Activated CD8-positive, alpha-beta memory T cell treated with anti-CD3 and anti-CD28 coated beads, Interleukin-2, amount 10 ng/mL, durations not matched to agents 7 days and 5 days (primary cell): ENCODE measurements at regions of chr1 and their contacts with region 1.

Region 1: GRCh38 chr1:206912445-206913095 is 9.2 kb downstream of the FCMR start:
- DNase-seq: peak; percentile 79
- ATAC-seq: peak; percentile 53
- H3K4me3 Mint-ChIP-seq: no peak overlapping the region
- H3K27ac Mint-ChIP-seq: no peak overlapping the region
- H3K4me1 Mint-ChIP-seq: peaks cover 40% of the 10 kb centered on the region
- H3K27me3 Mint-ChIP-seq: peaks cover 4% of the 10 kb centered on the region

Region 2: GRCh38 chr1:206489980-206490770 is 422.4 kb before region 1 on chr1:
- CTCF ChIA-PET with region 1: no interaction called
- DNase-seq: peak; percentile 79
- ATAC-seq: peak; percentile 81
- H3K4me3 Mint-ChIP-seq: no peak overlapping the region
- H3K27ac Mint-ChIP-seq: no peak overlapping the region
- H3K4me1 Mint-ChIP-seq: peaks cover 19% of the 10 kb centered on the region
- H3K27me3 Mint-ChIP-seq: no peaks in the 10 kb centered on the region

Region 3: DNA sequence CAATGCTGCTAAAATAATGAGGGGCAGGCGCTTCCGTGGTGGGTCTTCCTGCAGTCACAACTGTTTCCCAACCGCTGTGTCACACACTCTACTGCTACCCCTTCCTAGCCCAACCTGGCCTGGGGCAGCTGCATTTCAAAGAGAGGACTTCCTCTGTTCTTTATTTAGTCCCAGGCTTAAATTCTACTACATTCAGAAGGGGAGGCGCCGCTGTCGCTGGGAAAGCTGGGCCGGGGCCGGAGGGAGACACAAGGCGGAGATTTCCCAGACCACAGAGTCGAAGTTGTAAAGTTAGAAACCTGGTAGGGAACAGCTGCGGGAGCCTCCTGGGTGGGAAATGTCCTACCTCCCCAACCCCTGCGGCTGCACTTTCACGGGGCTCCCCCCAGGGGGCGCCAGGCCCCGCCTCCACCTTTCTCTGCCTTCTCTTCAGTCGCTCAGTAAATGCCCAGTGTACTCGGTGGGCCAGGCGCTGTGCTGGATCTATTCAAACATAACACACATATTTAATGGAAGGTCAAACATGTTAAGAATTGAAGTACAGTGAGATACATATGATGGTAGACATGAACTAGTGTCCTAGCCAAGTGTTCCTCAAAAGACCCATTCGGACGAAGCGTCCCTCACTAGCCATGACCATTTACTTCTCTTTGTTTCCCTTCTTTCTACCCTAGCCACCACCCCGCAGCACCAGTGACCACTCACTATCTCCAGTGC is 254.1 kb before region 1 on chr1:
- CTCF ChIA-PET with region 1: interaction called, 11 read pairs
- DNase-seq: peak; percentile 64
- ATAC-seq: peak; percentile 82
- H3K4me3 Mint-ChIP-seq: no peak overlapping the region
- H3K27ac Mint-ChIP-seq: no peak overlapping the region
- H3K4me1 Mint-ChIP-seq: peaks cover 19% of the 10 kb centered on the region
- H3K27me3 Mint-ChIP-seq: peaks cover 21% of the 10 kb centered on the region

Region 4: GRCh38 chr1:206797534-206798383 is 114.8 kb before region 1 on chr1:
- CTCF ChIA-PET with region 1: interaction called, 145 read pairs
- DNase-seq: no peak
- ATAC-seq: peak; percentile 52
- H3K4me3 Mint-ChIP-seq: no peak overlapping the region
- H3K27ac Mint-ChIP-seq: no peak overlapping the region
- H3K4me1 Mint-ChIP-seq: peaks cover 60% of the 10 kb centered on the region
- H3K27me3 Mint-ChIP-seq: peaks cover 39% of the 10 kb centered on the region

Region 5: DNA sequence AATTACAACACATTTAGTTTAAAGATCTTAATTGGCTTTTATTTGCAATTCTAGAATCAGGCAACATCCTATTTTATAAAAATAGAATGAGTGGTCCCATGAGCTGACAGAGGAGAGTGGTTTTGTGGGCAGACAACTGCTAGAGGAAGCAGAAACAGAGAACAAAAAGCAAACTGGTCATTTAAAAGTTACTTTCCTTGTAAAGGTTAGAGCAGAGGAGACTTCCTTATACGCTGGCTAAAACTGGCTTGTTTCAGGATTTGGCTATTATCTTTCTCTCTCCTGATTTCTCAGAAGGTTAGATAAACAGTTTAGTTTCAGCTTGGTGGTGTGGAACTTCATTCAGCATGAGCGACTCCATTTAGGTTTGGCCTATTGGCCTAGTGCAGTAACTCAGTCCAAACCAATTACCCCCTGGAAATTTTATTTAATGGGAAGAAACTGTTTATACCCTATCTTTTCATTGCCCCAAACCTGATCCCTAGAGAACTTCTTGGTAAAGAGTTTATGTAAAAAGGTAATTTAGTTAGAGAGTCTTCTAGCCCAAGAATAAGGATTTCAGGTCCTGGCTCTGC is 79.4 kb before region 1 on chr1:
- CTCF ChIA-PET with region 1: interaction called, 17 read pairs
- DNase-seq: no peak
- ATAC-seq: peak; percentile 38
- H3K4me3 Mint-ChIP-seq: no peak overlapping the region
- H3K27ac Mint-ChIP-seq: peak overlapping the region; percentile 4
- H3K4me1 Mint-ChIP-seq: peaks cover 52% of the 10 kb centered on the region
- H3K27me3 Mint-ChIP-seq: peaks cover 24% of the 10 kb centered on the region

Region 6: GRCh38 chr1:206925106-206925736 is 12.7 kb after region 1 on chr1:
- CTCF ChIA-PET with region 1: interaction called, 63 read pairs
- DNase-seq: peak; percentile 90
- ATAC-seq: peak; percentile 74
- H3K4me3 Mint-ChIP-seq: no peak overlapping the region
- H3K27ac Mint-ChIP-seq: no peak overlapping the region
- H3K4me1 Mint-ChIP-seq: peaks cover 8% of the 10 kb centered on the region
- H3K27me3 Mint-ChIP-seq: no peaks in the 10 kb centered on the region

Region 7: DNA sequence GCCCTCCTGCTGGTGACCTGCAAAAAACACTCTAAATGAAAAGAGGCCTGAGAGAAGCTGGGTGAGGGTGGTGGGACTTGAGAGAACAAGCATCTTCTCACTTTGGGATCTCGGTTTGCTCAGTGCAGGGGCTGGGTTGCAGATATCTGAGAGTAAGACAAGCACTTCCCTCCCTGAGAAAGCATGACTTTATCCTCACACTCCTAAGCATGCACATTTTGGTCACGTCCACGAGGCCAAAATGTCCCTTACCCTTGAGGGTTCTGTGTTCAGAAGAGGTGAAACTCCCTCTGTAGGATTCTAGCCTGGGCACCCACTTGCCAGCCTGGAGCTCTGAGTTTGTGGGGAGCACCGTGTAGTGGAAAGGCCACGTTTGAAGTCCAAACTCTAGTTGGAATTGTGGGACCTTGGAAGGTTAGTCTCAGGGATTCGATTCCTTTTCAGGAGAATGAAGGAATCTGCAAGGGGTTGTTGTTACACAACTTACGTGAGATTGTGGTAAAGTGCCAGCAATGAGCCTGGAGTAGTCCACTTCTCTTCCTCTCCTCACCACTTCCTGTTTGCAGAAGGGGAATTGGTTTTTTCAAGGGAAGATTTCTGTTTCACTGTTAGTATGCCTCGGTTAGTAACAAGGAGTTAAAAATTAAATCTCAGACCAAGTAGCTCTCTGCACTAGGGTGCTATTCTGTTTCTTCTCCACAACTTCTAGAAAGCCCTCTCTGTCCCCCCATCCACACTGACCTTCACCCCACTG is 54.7 kb after region 1 on chr1:
- CTCF ChIA-PET with region 1: interaction called, 16 read pairs
- DNase-seq: no peak
- ATAC-seq: peak; percentile 39
- H3K4me3 Mint-ChIP-seq: peak overlapping the region; percentile 40
- H3K27ac Mint-ChIP-seq: peak overlapping the region; percentile 50
- H3K4me1 Mint-ChIP-seq: peaks cover 35% of the 10 kb centered on the region
- H3K27me3 Mint-ChIP-seq: peaks cover 30% of the 10 kb centered on the region

Region 8: DNA sequence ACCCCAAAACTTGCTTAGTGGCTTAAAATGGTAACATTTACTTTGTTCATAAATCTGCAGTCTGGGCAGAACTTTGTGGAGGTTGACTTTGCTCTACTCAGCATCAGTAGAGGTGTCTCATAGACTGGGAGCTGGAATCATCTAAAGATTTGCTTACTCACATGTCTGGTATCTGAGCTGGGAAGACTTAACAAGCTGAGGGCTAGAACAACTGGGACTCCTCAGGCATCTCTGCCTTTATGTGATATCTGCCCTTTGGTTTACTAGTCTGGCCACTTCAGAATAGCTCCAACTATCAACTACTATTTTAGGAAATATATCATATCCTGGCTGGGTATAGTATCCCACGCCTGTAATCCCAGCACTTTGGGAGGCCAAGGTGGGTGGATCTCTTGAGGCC is 273.9 kb after region 1 on chr1:
- CTCF ChIA-PET with region 1: no interaction called
- DNase-seq: no peak
- ATAC-seq: no peak
- H3K4me3 Mint-ChIP-seq: no peak overlapping the region
- H3K27ac Mint-ChIP-seq: no peak overlapping the region
- H3K4me1 Mint-ChIP-seq: no peaks in the 10 kb centered on the region
- H3K27me3 Mint-ChIP-seq: peaks cover 10% of the 10 kb centered on the region

Region 9: DNA sequence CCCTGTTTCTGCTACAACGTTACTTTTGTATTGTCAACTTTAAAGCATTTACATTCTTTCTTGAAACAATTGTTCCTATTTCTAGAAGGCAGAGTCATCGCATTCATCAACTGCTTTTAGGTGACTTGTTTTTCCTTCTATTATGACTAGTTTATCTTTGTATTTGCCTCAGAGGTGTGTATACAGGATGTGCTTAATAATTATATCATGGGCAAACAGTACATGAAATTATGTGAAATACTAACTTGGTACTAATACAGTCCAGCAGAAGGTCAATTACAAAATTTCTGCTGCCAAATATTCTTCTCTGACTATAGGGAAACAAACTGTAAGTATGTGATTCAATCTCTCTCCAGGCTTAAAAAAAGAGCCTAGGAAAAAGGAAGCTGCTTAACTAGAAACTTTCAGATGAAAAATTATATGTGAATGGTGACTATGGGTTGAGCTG is 293.1 kb after region 1 on chr1:
- CTCF ChIA-PET with region 1: no interaction called
- DNase-seq: no peak
- ATAC-seq: no peak
- H3K4me3 Mint-ChIP-seq: no peak overlapping the region
- H3K27ac Mint-ChIP-seq: no peak overlapping the region
- H3K4me1 Mint-ChIP-seq: peaks cover 2% of the 10 kb centered on the region
- H3K27me3 Mint-ChIP-seq: peaks cover 4% of the 10 kb centered on the region